ENCODE measurements at regions of chr2 and their contacts with region 1.

Region 1: GRCh38 chr2:54041135-54041534 is 70.3 kb upstream of the PSME4 start:
- DNase-seq: no peak

Region 2: GRCh38 chr2:53987336-53987921 is 53.7 kb before region 1 on chr2:
- intact Hi-C with region 1: loop called (anchors 5 kb)
- DNase-seq: no peak